CD4-positive, alpha-beta memory T cell (primary cell): ENCODE measurements at regions of chr15 and their contacts with region 1.

Region 1: GRCh38 chr15:69760890-69761568 is 308.4 kb downstream of the RPLP1 start:
- DNase-seq: peak; percentile 83 to 94 (median 86)
- H3K4me3 ChIP-seq: no peak overlapping the region
- H3K4me3 Mint-ChIP-seq: peak overlapping the region; percentile 37 to 72 (median 60)
- H3K27ac ChIP-seq: no peak overlapping the region
- H3K27ac Mint-ChIP-seq: peak overlapping the region; percentile 35 to 97 (median 90)
- H3K4me1 ChIP-seq: peaks cover 69% of the 10 kb centered on the region
- H3K4me1 Mint-ChIP-seq: peaks cover 56 to 69% (median 65%) of the 10 kb centered on the region in 4 donors
- H3K27me3 ChIP-seq: no peaks in the 10 kb centered on the region
- H3K27me3 Mint-ChIP-seq: peaks cover 0 to 2% of the 10 kb centered on the region in 2 donors

Region 2: DNA sequence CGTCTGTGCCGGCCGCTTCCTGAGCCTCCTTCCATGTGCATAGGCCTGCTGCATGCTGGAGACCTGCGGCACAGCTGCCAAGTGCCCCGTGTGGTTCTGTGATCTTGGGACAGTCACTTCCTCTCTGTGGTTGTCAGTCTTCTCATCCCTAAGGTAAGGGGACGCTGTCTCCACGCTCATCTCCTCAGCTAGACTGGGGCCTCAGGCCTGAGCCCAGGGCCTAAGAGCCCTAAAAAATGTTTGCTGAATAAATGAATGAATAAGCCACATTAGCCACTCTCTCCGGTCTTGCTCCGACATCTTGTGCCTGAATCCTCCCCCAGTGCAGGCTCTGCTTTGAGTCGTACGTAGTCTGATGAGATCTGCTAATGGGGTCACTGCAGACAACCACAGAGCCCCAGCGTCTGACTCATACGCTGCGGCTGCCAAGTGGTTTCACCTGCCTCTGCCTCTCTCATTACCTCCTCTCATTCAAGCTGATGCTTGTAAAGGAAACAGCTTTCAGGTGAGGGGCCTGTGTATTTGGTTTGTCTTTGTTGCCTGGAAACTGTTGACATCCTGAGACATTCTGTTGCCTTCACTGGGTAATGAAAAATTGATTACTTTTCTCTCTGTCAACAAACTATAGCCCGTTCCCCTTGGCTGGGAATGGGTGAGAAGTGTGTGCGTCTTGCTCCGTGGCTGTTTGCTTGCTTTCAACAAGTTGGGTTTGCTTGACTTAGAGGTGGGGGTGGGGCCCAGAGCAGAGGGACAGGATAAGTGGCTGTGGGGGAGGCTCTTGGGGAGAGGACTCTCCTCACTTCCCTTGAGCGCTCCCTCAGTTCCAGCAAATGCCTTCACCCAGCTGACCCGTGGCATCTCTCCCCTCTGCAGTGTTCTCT is 292.5 kb before region 1 on chr15:
- CTCF ChIA-PET with region 1: no interaction called
- POLR2A ChIA-PET with region 1: interaction called, 21 read pairs
- intact Hi-C with region 1: loop called (anchors 2 kb)
- DNase-seq: peak; percentile 90 to 98 (median 94)
- H3K4me3 ChIP-seq: peak overlapping the region in 1 of 2 donors; percentile 34
- H3K4me3 Mint-ChIP-seq: peak overlapping the region; percentile 50 to 87 (median 78)
- H3K27ac ChIP-seq: peak overlapping the region; percentile 90
- H3K27ac Mint-ChIP-seq: peak overlapping the region; percentile 97 to 100 (median 100)
- H3K4me1 ChIP-seq: peaks cover 41% of the 10 kb centered on the region
- H3K4me1 Mint-ChIP-seq: peaks cover 22 to 50% (median 29%) of the 10 kb centered on the region in 4 donors
- H3K27me3 ChIP-seq: no peaks in the 10 kb centered on the region
- H3K27me3 Mint-ChIP-seq: no peaks in the 10 kb centered on the region

Region 3: DNA sequence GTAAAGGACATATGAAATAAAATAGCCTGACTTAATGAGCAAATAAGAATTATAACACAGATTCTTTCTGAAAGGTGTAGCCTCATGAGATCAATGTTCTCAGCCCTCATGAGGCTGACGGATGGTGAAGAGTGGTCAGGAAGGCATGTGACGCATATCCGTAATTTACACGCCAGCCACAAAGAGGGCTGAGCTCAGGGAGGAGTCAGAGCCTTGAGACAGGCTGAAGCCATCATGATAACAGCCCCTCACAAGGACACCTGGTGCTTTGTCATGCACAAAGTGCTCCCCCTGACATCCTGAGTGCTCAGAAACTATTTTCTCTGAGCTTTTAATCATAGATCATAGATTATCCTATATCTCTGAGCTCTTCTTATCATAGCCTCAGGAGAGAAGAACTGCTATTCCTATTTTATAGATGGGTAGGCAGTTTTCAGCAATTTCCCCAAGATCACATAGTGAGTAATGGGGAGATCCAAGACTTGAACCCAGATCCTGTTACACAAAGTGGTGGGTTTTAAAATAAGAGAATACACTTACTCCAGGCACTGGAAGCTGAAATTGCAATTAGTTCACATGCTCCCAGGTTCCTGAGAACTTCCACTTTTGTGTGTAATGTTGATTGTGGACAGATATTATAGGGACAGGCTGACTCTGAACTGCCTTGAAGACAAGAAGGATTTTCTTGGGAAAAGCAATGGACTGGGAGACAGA is 41.3 kb before region 1 on chr15:
- CTCF ChIA-PET with region 1: interaction called, 5 read pairs
- POLR2A ChIA-PET with region 1: interaction called, 117 read pairs
- intact Hi-C with region 1: loop called (anchors 1 kb)
- DNase-seq: peak; percentile 68 to 89 (median 78)
- H3K4me3 ChIP-seq: no peak overlapping the region
- H3K4me3 Mint-ChIP-seq: peak overlapping the region in 7 of 8 donors; percentile 18 to 94 (median 51)
- H3K27ac ChIP-seq: peak overlapping the region; percentile 39
- H3K27ac Mint-ChIP-seq: peak overlapping the region; percentile 93 to 97 (median 95)
- H3K4me1 ChIP-seq: peaks cover 96% of the 10 kb centered on the region
- H3K4me1 Mint-ChIP-seq: peaks cover 62 to 92% (median 81%) of the 10 kb centered on the region in 4 donors
- H3K27me3 ChIP-seq: no peaks in the 10 kb centered on the region
- H3K27me3 Mint-ChIP-seq: peaks cover 0 to 1% of the 10 kb centered on the region in 2 donors

Region 4: DNA sequence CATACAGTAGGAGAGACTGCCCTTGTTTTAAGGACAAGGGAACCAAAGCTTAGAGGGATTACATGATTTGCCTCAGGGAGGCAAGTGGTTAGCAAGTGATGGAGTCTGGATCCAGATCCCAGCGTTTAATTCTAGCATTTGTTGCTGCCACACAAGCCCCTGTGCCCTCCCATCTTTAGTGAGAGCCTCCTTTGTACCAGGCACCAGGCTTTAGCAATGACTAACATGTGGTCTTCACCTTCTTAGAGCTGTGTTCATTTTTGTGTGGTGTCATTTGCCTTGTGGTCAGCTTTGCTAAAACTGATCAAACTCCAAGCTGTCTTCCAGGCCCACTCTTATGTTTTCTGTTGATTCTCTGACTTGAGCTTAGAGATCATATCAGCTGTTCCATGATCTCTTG is 17.9 kb before region 1 on chr15:
- CTCF ChIA-PET with region 1: interaction called, 13 read pairs
- POLR2A ChIA-PET with region 1: interaction called, 10 read pairs
- intact Hi-C with region 1: no loop called
- DNase-seq: no peak
- H3K4me3 ChIP-seq: no peak overlapping the region
- H3K4me3 Mint-ChIP-seq: no peak overlapping the region
- H3K27ac ChIP-seq: no peak overlapping the region
- H3K27ac Mint-ChIP-seq: no peak overlapping the region
- H3K4me1 ChIP-seq: peaks cover 17% of the 10 kb centered on the region
- H3K4me1 Mint-ChIP-seq: peaks cover 9 to 27% (median 17%) of the 10 kb centered on the region in 4 donors
- H3K27me3 ChIP-seq: no peaks in the 10 kb centered on the region
- H3K27me3 Mint-ChIP-seq: no peaks in the 10 kb centered on the region

Region 5: GRCh38 chr15:69782809-69783208 is 21.8 kb after region 1 on chr15:
- CTCF ChIA-PET with region 1: interaction called, 3 read pairs
- POLR2A ChIA-PET with region 1: interaction called, 3 read pairs
- intact Hi-C with region 1: loop called (anchors 2 kb)
- DNase-seq: peak in 1 of 5 donors; percentile 9
- H3K4me3 ChIP-seq: no peak overlapping the region
- H3K4me3 Mint-ChIP-seq: no peak overlapping the region
- H3K27ac ChIP-seq: no peak overlapping the region
- H3K27ac Mint-ChIP-seq: no peak overlapping the region
- H3K4me1 ChIP-seq: peaks cover 16% of the 10 kb centered on the region
- H3K4me1 Mint-ChIP-seq: peaks cover 11 to 25% (median 17%) of the 10 kb centered on the region in 4 donors
- H3K27me3 ChIP-seq: no peaks in the 10 kb centered on the region
- H3K27me3 Mint-ChIP-seq: peaks cover 15% of the 10 kb centered on the region in 2 donors

Region 6: DNA sequence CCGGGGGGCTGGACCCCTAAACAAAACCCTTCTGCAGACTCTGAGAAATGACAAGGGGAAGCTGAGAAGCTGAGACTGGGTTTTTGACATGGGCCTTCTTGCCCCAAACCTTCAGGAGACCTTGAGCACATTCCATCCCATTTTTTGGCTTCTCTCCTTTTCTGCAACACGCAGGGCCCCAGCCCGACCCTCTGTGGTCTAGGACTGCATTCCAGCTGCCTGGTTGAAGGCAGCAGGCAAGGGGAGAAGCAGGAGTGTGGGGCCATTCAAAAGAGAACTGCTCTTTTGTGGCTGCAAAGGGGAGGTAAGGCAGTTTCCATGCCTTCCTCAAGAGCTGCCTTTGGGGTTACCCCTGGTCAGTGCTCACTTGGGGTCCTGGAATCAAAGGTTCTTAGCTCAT is 73.7 kb after region 1 on chr15:
- CTCF ChIA-PET with region 1: no interaction called
- POLR2A ChIA-PET with region 1: no interaction called
- intact Hi-C with region 1: no loop called
- DNase-seq: no peak
- H3K4me3 ChIP-seq: no peak overlapping the region
- H3K4me3 Mint-ChIP-seq: no peak overlapping the region
- H3K27ac ChIP-seq: no peak overlapping the region
- H3K27ac Mint-ChIP-seq: no peak overlapping the region
- H3K4me1 ChIP-seq: no peaks in the 10 kb centered on the region
- H3K4me1 Mint-ChIP-seq: peaks cover 0 to 3% (median 0%) of the 10 kb centered on the region in 4 donors
- H3K27me3 ChIP-seq: no peaks in the 10 kb centered on the region
- H3K27me3 Mint-ChIP-seq: peaks cover 0 to 7% of the 10 kb centered on the region in 2 donors